Heart left ventricle (tissue), 16 donors: ENCODE measurements at regions of chr17 and their contacts with region 1.

Region 1: GRCh38 chr17:63406689-63407330 is 39.3 kb downstream of the CYB561 start:
- DNase-seq: peak in 4 of 5 donors; percentile 65 to 77 (median 68)
- ATAC-seq: peak; percentile 65 to 89 (median 84)
- H3K4me3 ChIP-seq: no peak overlapping the region
- H3K27ac ChIP-seq: no peak overlapping the region
- H3K4me1 ChIP-seq: peaks cover 0 to 26% (median 2%) of the 10 kb centered on the region in 12 donors
- H3K27me3 ChIP-seq: no peaks in the 10 kb centered on the region
- CTCF ChIP-seq: peak; percentile 74 to 93 (median 84)
- POLR2A ChIP-seq: no peak

Region 2: GRCh38 chr17:62671583-62672312 is 735.1 kb before region 1 on chr17:
- intact Hi-C with region 1: loop called in 7 of 10 experiments (anchors 1 to 10 kb)
- DNase-seq: peak in 1 of 5 donors; percentile 68
- ATAC-seq: peak in 2 of 4 donors; percentile 17 to 35
- H3K4me3 ChIP-seq: no peak overlapping the region
- H3K27ac ChIP-seq: no peak overlapping the region
- H3K4me1 ChIP-seq: peaks cover 0 to 8% (median 0%) of the 10 kb centered on the region in 12 donors
- H3K27me3 ChIP-seq: no peaks in the 10 kb centered on the region
- CTCF ChIP-seq: no peak
- POLR2A ChIP-seq: no peak

Region 3: GRCh38 chr17:62987137-62987536 is 419.7 kb before region 1 on chr17:
- intact Hi-C with region 1: loop called in 5 of 10 experiments (anchors 10 kb)
- DNase-seq: no peak
- ATAC-seq: no peak
- H3K4me3 ChIP-seq: no peak overlapping the region
- H3K27ac ChIP-seq: no peak overlapping the region
- H3K4me1 ChIP-seq: peaks cover 0 to 5% (median 0%) of the 10 kb centered on the region in 12 donors
- H3K27me3 ChIP-seq: no peaks in the 10 kb centered on the region
- CTCF ChIP-seq: peak in 1 of 12 donors; percentile 9
- POLR2A ChIP-seq: no peak

Region 4: GRCh38 chr17:63075969-63076368 is 330.8 kb before region 1 on chr17:
- intact Hi-C with region 1: loop called in 7 of 10 experiments (anchors 2 to 10 kb)
- DNase-seq: no peak
- ATAC-seq: no peak
- H3K4me3 ChIP-seq: no peak overlapping the region
- H3K27ac ChIP-seq: no peak overlapping the region
- H3K4me1 ChIP-seq: peaks cover 0 to 3% (median 0%) of the 10 kb centered on the region in 12 donors
- H3K27me3 ChIP-seq: no peaks in the 10 kb centered on the region
- CTCF ChIP-seq: no peak
- POLR2A ChIP-seq: no peak

Region 5: DNA sequence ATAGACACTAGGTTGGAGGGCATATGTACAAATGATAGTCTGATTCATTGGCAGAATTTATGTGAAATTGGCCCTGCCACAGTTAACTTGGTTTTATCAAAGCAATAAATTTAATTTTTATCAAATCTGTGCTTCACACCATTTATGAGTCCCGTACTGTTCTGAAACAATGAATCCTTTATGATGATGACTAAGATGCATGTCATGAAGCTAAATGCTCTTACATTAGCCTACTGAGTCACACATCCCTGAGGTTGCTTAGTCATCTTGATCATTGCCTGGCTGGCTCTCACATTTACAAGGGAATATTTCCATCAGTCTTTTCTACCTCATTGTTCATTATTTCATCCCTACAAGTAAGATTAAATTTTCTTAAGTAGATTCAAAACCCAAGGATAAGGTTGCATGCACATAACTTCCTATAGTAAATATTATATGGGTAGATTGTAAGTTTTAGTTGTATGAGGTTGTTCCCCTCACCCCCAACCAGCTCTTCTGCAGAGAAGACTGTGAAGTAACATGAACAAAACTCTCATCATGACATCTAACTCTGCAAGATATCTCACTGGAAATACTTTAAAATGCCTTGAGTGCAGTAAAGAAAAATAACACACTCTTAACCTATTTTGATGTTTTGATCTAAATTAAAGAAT is 131.4 kb before region 1 on chr17:
- intact Hi-C with region 1: loop called in 1 of 10 experiments (anchors 10 kb)
- DNase-seq: no peak
- ATAC-seq: peak in 3 of 4 donors; percentile 73 to 91 (median 78)
- H3K4me3 ChIP-seq: no peak overlapping the region
- H3K27ac ChIP-seq: peak overlapping the region in 6 of 12 donors; percentile 8 to 51 (median 42)
- H3K4me1 ChIP-seq: peaks cover 0 to 53% (median 5%) of the 10 kb centered on the region in 12 donors
- H3K27me3 ChIP-seq: no peaks in the 10 kb centered on the region
- CTCF ChIP-seq: no peak
- POLR2A ChIP-seq: no peak

Region 6: GRCh38 chr17:63356337-63356757 is 50.5 kb before region 1 on chr17:
- intact Hi-C with region 1: no loop called
- DNase-seq: no peak
- ATAC-seq: peak in 3 of 4 donors; percentile 68 to 92 (median 83)
- H3K4me3 ChIP-seq: no peak overlapping the region
- H3K27ac ChIP-seq: peak overlapping the region in 7 of 12 donors; percentile 2 to 57 (median 33)
- H3K4me1 ChIP-seq: peaks cover 0 to 22% (median 2%) of the 10 kb centered on the region in 12 donors
- H3K27me3 ChIP-seq: no peaks in the 10 kb centered on the region
- CTCF ChIP-seq: no peak
- POLR2A ChIP-seq: no peak